ENCODE measurements at regions of chr16 and their contacts with region 1.

Region 1: GRCh38 chr16:70653809-70654771 is 7.7 kb downstream of the IL34 start:
- DNase-seq: peak; percentile 60 to 86 (median 78)
- ATAC-seq: peak; percentile 92
- H3K4me3 ChIP-seq: no peak overlapping the region
- H3K4me3 Mint-ChIP-seq: no peak overlapping the region
- H3K27ac ChIP-seq: no peak overlapping the region
- H3K27ac Mint-ChIP-seq: no peak overlapping the region
- H3K4me1 ChIP-seq: peaks cover 4% of the 10 kb centered on the region
- H3K4me1 Mint-ChIP-seq: peaks cover 4% of the 10 kb centered on the region
- H3K27me3 ChIP-seq: no peaks in the 10 kb centered on the region
- H3K27me3 Mint-ChIP-seq: no peaks in the 10 kb centered on the region
- CTCF ChIP-seq: peak; percentile 88

Region 2: GRCh38 chr16:69796351-69797118 is 857.6 kb before region 1 on chr16:
- CTCF ChIA-PET with region 1: no interaction called
- POLR2A ChIA-PET with region 1: no interaction called
- intact Hi-C with region 1: loop called in 1 of 2 experiments (anchors 2 kb)
- DNase-seq: peak in 5 of 14 experiments; percentile 10 to 69 (median 37)
- ATAC-seq: peak; percentile 76
- H3K4me3 ChIP-seq: no peak overlapping the region
- H3K4me3 Mint-ChIP-seq: no peak overlapping the region
- H3K27ac ChIP-seq: no peak overlapping the region
- H3K27ac Mint-ChIP-seq: no peak overlapping the region
- H3K4me1 ChIP-seq: no peaks in the 10 kb centered on the region
- H3K4me1 Mint-ChIP-seq: peaks cover 6% of the 10 kb centered on the region
- H3K27me3 ChIP-seq: no peaks in the 10 kb centered on the region
- H3K27me3 Mint-ChIP-seq: no peaks in the 10 kb centered on the region
- CTCF ChIP-seq: peak; percentile 91

Region 3: GRCh38 chr16:70331588-70332358 is 322.3 kb before region 1 on chr16:
- CTCF ChIA-PET with region 1: no interaction called
- POLR2A ChIA-PET with region 1: no interaction called
- intact Hi-C with region 1: loop called in 1 of 2 experiments (anchors 2 kb)
- DNase-seq: peak in 7 of 14 experiments; percentile 5 to 33 (median 15)
- ATAC-seq: peak; percentile 68
- H3K4me3 ChIP-seq: no peak overlapping the region
- H3K4me3 Mint-ChIP-seq: no peak overlapping the region
- H3K27ac ChIP-seq: no peak overlapping the region
- H3K27ac Mint-ChIP-seq: no peak overlapping the region
- H3K4me1 ChIP-seq: no peaks in the 10 kb centered on the region
- H3K4me1 Mint-ChIP-seq: no peaks in the 10 kb centered on the region
- H3K27me3 ChIP-seq: no peaks in the 10 kb centered on the region
- H3K27me3 Mint-ChIP-seq: no peaks in the 10 kb centered on the region
- CTCF ChIP-seq: peak; percentile 58

Region 4: GRCh38 chr16:70372921-70373728 is 281.0 kb before region 1 on chr16:
- CTCF ChIA-PET with region 1: no interaction called
- POLR2A ChIA-PET with region 1: no interaction called
- intact Hi-C with region 1: loop called (anchors 2 to 5 kb)
- DNase-seq: no peak
- ATAC-seq: no peak
- H3K4me3 ChIP-seq: no peak overlapping the region
- H3K4me3 Mint-ChIP-seq: no peak overlapping the region
- H3K27ac ChIP-seq: no peak overlapping the region
- H3K27ac Mint-ChIP-seq: no peak overlapping the region
- H3K4me1 ChIP-seq: peaks cover 8% of the 10 kb centered on the region
- H3K4me1 Mint-ChIP-seq: peaks cover 11% of the 10 kb centered on the region
- H3K27me3 ChIP-seq: no peaks in the 10 kb centered on the region
- H3K27me3 Mint-ChIP-seq: no peaks in the 10 kb centered on the region
- CTCF ChIP-seq: no peak

Region 5: DNA sequence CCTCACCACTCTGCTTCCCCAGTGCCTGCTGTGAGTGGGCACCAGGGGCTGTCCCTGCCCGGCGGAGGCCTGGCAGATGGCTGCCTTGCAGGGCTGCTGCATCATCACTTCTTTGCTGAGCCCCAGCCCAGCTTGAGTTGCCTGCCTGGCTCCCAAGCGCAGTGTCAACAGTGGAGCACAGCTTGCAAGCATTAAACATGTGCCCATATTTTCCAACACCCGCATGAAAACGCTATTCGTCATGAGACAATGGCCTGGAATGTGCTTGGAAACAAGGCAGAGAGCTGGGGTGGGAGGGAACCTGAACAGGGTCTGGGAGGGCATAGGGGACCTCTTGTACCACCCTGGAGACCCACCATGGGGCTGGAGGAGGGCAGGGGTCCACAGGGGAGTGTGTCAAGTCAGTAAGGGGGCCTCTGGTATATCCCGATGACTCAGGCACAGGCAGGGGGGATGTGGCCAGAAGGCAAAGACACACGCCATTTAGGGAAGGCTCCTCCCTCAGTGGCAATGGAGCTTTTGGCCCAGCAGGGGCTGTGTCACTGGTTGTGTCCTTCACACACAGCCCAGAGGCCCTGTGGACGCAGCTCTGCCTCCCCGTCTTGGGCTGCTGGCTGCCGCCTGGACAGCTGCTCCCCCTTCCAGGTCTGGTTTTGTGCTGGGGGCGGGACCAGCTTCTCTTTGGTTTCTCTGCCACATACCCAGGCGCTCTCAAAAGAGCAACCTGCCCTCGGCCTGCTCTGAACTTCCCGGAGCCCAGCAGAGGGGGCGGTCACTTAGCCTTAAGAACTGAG is 49.1 kb after region 1 on chr16:
- CTCF ChIA-PET with region 1: no interaction called
- POLR2A ChIA-PET with region 1: no interaction called
- intact Hi-C with region 1: no loop called
- DNase-seq: no peak
- ATAC-seq: no peak
- H3K4me3 ChIP-seq: no peak overlapping the region
- H3K4me3 Mint-ChIP-seq: no peak overlapping the region
- H3K27ac ChIP-seq: no peak overlapping the region
- H3K27ac Mint-ChIP-seq: no peak overlapping the region
- H3K4me1 ChIP-seq: peaks cover 3% of the 10 kb centered on the region
- H3K4me1 Mint-ChIP-seq: peaks cover 5% of the 10 kb centered on the region
- H3K27me3 ChIP-seq: no peaks in the 10 kb centered on the region
- H3K27me3 Mint-ChIP-seq: no peaks in the 10 kb centered on the region
- CTCF ChIP-seq: no peak

Region 6: DNA sequence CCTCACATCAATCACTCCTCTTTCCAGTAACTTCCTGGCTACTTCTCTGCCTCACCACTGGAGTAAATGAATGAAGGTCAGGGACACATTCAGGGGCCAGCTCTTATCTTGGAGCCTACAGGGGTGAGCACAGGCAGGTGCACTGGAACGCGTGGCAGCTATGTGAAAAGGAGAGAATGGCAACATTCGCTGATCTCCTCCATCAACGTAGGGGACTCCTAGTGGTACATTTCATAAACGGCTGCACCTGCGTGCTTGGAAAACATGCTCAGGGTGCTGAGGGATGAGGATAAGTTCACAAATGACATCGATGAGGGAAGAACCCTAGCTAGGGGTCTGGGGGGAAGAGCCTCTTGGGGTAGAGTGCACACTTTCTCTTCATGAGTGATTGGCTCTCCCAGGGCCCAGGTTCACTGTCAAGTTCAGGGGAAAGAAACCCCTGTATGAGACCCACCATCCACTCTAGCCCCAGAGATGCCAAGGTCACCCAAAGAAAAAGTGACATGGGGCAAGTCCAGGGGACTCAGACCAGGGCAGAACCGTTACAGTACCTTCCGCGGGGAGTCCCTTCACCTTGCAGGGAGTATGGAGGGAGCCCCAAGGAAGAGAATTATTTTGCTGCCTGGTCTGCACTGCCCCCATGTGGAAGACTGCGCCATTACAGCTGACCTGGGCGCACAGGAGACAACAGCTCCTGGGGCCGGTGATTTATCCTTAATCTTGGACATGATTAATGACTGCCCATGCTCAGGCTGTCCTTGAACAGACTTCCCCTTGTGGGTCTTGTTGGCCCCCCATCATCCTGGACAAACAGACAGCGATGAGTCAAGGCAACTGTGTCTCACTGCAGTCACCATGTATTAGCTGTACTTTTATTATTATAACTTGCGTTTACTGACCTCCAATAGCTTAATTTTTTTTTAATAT is 116.8 kb after region 1 on chr16:
- CTCF ChIA-PET with region 1: interaction called, 3 read pairs
- POLR2A ChIA-PET with region 1: no interaction called
- intact Hi-C with region 1: loop called in 1 of 2 experiments (anchors 1 kb)
- DNase-seq: peak; percentile 17 to 66 (median 45)
- ATAC-seq: peak; percentile 84
- H3K4me3 ChIP-seq: no peak overlapping the region
- H3K4me3 Mint-ChIP-seq: no peak overlapping the region
- H3K27ac ChIP-seq: no peak overlapping the region
- H3K27ac Mint-ChIP-seq: no peak overlapping the region
- H3K4me1 ChIP-seq: no peaks in the 10 kb centered on the region
- H3K4me1 Mint-ChIP-seq: no peaks in the 10 kb centered on the region
- H3K27me3 ChIP-seq: no peaks in the 10 kb centered on the region
- H3K27me3 Mint-ChIP-seq: no peaks in the 10 kb centered on the region
- CTCF ChIP-seq: peak; percentile 86